OCI-LY7 (cell line): ENCODE measurements at regions of chr9 and their contacts with region 1.

Region 1: DNA sequence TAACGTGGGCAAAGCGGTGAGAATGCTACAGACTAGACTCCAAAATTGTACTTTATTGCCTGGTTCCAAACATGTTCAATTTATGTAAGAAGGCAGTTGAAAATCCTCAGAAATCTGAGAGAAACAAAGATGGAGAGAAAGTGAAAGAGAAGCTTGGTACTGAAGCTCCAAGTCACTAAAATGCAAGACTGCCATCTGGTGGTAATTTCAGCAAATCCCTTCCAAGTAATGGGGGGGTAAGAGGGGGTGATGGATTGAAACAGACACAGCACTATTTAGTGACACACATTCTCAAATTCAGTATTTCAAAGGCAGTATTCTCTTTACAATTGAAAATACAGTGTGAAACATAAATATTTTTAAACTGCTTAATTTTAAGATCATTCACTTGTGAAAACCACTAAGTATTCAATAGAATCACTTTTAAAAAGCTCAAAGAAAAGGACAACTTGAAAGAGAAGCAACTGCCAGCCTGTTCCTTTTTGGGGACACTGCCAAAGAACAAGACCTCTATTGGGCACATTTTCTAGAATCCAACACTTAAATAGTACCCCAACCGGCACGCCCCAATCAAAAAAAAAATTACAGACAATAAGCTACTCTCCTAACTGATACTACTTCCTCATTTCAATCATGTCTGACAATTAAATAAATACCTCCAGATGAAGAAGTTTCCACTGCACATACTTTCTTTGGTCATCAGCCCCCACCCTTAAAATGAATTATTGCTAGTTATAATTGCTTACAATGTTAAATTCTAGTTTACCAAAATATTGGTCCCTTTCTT is 131.5 kb downstream of the AGTPBP1 start:
- DNase-seq: peak; percentile 73
- H3K4me3 ChIP-seq: no peak overlapping the region
- H3K27ac ChIP-seq: no peak overlapping the region
- H3K4me1 ChIP-seq: peaks cover 12% of the 10 kb centered on the region
- CTCF ChIP-seq: peak; percentile 94

Region 2: DNA sequence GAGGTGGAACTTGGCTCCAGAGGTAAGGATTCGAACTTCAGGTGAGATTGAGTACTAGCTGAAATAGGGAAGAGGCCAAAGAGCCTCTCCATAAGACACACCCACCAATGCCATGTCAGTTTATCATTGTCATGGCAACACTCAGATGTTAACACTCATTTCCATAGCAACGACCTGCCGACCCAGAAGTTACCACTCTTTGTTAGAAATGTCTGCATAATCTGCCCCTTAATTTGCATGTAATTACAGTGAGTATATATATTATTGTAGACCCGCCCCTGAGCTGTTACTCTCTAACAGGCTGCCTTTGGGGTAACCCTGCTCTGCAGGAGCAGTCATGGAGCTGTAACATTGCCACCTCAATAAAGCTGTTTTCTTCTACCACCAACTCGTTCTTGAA is 951.0 kb before region 1 on chr9:
- CTCF ChIA-PET with region 1: no interaction called
- POLR2A ChIA-PET with region 1: interaction called, 11 read pairs
- intact Hi-C with region 1: no loop called
- DNase-seq: no peak
- H3K4me3 ChIP-seq: no peak overlapping the region
- H3K27ac ChIP-seq: no peak overlapping the region
- H3K4me1 ChIP-seq: no peaks in the 10 kb centered on the region
- CTCF ChIP-seq: no peak